Upper lobe of right lung (tissue), 1 donor: ENCODE measurements at regions of chr18 and their contacts with region 1.

Region 1: GRCh38 chr18:32478317-32478716 is 7.6 kb upstream of the GAREM1 start:
- DNase-seq: no peak
- ATAC-seq: no peak
- H3K4me3 ChIP-seq: no peak overlapping the region
- H3K27ac ChIP-seq: no peak overlapping the region
- H3K4me1 ChIP-seq: no peaks in the 10 kb centered on the region
- H3K27me3 ChIP-seq: peaks cover 4% of the 10 kb centered on the region
- CTCF ChIP-seq: no peak

Region 2: DNA sequence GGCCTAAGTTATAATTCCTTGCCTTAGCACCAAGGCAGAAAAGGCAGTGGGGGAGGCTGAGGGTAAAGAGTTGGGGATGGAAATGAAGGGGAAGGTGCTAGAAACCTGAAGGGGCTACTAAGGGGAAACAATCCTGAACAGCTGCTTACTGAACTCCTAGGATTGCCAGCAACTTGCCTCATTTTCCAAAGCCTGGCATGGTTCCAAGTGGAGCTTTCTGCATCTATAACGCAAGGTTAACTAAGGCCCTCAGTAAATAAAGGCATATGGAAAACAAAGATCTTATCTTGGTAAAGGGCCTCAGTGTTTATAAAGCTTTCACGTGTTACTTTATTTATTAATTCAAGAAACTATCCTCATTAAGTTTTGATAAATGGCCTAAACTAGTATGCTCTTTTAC is 277.6 kb before region 1 on chr18:
- intact Hi-C with region 1: no loop called
- DNase-seq: no peak
- ATAC-seq: no peak
- H3K4me3 ChIP-seq: no peak overlapping the region
- H3K27ac ChIP-seq: no peak overlapping the region
- H3K4me1 ChIP-seq: no peaks in the 10 kb centered on the region
- H3K27me3 ChIP-seq: no peaks in the 10 kb centered on the region
- CTCF ChIP-seq: no peak

Region 3: GRCh38 chr18:32284284-32284683 is 194.0 kb before region 1 on chr18:
- intact Hi-C with region 1: loop called (anchors 5 kb)
- DNase-seq: no peak
- ATAC-seq: no peak
- H3K4me3 ChIP-seq: no peak overlapping the region
- H3K27ac ChIP-seq: no peak overlapping the region
- H3K4me1 ChIP-seq: no peaks in the 10 kb centered on the region
- H3K27me3 ChIP-seq: no peaks in the 10 kb centered on the region
- CTCF ChIP-seq: no peak